Gastrocnemius medialis (tissue), 4 donors: ENCODE measurements at regions of chr14 and their contacts with region 1.

Region 1: DNA sequence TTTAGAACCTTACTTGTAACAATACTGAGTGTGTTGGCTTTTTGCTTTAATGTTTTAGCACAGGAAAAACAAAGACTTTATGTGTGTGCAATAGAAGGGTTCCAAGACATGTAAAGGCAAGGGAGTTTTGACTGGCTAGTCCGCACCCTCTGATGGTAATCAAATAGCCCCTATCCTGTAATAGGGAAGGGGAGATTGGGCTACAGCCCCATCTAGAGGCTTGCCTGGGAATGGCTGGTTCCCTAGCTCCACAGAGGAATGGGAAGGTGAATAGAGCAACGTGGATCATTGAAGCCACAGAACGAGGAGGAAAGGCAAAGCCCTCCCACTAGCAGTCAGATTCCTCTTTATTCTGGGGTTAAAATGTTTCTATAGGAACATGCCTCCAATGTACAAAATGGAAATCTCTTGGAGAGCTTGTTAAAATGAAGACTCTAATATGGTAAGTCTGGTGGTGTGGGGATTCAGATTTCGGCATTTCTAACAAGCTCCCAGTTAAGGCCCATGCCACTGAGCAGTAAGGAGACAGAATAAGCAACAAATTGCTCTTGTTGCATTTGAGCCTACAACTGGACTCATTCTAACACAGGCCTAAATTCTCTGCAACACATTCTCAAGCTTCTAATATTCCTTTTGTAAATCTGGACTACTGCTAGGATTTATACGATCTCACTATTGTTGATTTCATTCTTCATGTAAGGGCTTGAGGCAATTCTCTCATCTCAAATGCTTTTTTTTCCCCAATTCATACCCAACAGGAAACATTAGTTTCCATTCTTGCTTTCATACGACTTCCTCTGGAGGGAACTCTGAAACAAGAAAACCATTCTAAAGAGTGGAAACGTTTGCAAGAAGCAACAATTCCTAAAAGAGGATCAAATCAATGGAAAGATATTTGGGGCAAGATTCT is 57.1 kb downstream of the NIN start:
- DNase-seq: peak in 1 of 2 donors; percentile 53
- ATAC-seq: peak; percentile 48 to 74
- H3K4me3 ChIP-seq: no peak overlapping the region
- H3K27ac ChIP-seq: peak overlapping the region in 3 of 4 donors; percentile 70 to 79 (median 79)
- H3K4me1 ChIP-seq: peaks cover 17 to 37% of the 10 kb centered on the region in 2 donors
- H3K27me3 ChIP-seq: no peaks in the 10 kb centered on the region
- CTCF ChIP-seq: peak; percentile 58 to 87 (median 79)
- POLR2A ChIP-seq: no peak

Region 2: GRCh38 chr14:50321009-50321660 is 452.8 kb before region 1 on chr14:
- in situ Hi-C with region 1: loop called in 2 of 4 experiments (anchors 25 kb)
- intact Hi-C with region 1: loop called (anchors 2 kb)
- DNase-seq: peak; percentile 44 to 51
- ATAC-seq: peak; percentile 96 to 99
- H3K4me3 ChIP-seq: peak overlapping the region; percentile 15 to 40 (median 28)
- H3K27ac ChIP-seq: peak overlapping the region; percentile 52 to 72 (median 63)
- H3K4me1 ChIP-seq: peaks cover 16 to 23% of the 10 kb centered on the region in 2 donors
- H3K27me3 ChIP-seq: no peaks in the 10 kb centered on the region
- CTCF ChIP-seq: peak; percentile 52 to 89 (median 77)
- POLR2A ChIP-seq: no peak

Region 3: DNA sequence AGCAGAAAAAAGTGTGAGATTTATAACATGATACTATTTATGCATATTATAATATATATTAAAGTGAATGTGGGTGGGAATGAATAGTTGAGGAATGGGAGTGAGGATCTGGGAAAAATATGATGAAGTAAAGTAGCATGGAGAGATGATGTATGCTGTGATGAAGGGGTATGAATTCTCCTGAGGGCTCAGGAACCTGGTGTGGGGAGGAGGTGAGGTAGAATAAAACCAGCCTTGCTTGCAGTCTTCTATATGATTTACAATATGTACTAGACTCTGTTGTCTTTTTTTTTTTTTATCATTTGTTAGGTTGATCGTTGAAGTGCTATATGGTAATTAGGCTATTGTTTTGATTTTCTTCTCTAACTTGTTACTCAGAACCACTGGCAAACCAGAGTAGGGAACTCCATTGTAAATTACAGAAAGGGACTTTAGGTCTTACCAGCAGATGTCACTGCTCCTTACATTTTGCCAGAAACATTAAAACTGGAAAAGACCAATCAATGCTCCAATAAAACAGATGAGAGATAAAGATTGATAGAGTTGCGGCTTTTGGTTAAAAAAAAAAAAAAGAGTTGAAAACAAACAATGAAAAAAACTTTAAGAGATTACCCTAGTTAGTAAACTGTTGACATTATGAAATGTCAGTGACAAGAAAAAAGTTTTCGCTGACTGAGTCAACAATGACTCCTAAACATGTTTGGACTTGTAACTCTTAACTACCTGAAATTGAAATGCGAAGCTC is 174.0 kb before region 1 on chr14:
- in situ Hi-C with region 1: loop called in 3 of 4 experiments (anchors 5 to 10 kb)
- intact Hi-C with region 1: loop called (anchors 1 kb)
- DNase-seq: no peak
- ATAC-seq: peak in 1 of 2 donors; percentile 51
- H3K4me3 ChIP-seq: no peak overlapping the region
- H3K27ac ChIP-seq: no peak overlapping the region
- H3K4me1 ChIP-seq: no peaks in the 10 kb centered on the region
- H3K27me3 ChIP-seq: no peaks in the 10 kb centered on the region
- CTCF ChIP-seq: peak; percentile 29 to 61 (median 53)
- POLR2A ChIP-seq: no peak

Region 4: GRCh38 chr14:50667996-50668825 is 105.7 kb before region 1 on chr14 and contains the start of gene SAV1:
- in situ Hi-C with region 1: no loop called
- intact Hi-C with region 1: loop called (anchors 1 kb)
- DNase-seq: peak; percentile 72 to 82
- ATAC-seq: peak; percentile 87 to 90
- H3K4me3 ChIP-seq: peak within 1 kb of the TSS; percentile 65 to 95 (median 80)
- H3K27ac ChIP-seq: peak within 1 kb of the TSS; percentile 89 to 97 (median 96)
- H3K4me1 ChIP-seq: peaks cover 27 to 29% of the 10 kb centered on the region in 2 donors
- H3K27me3 ChIP-seq: no peaks in the 10 kb centered on the region
- CTCF ChIP-seq: peak in 1 of 5 experiments; percentile 7
- POLR2A ChIP-seq: peak; percentile 93 to 94
- total RNA-seq, gene SAV1: 18.3 to 68.7 (median 36.8) TPM

Region 5: GRCh38 chr14:50860478-50861086 is 86.7 kb after region 1 on chr14:
- in situ Hi-C with region 1: no loop called
- intact Hi-C with region 1: loop called (anchors 5 kb)
- DNase-seq: peak; percentile 42 to 57
- ATAC-seq: peak; percentile 76 to 77
- H3K4me3 ChIP-seq: peak overlapping the region; percentile 59 to 61 (median 60)
- H3K27ac ChIP-seq: peak overlapping the region; percentile 36 to 73 (median 66)
- H3K4me1 ChIP-seq: peaks cover 9 to 10% of the 10 kb centered on the region in 2 donors
- H3K27me3 ChIP-seq: no peaks in the 10 kb centered on the region
- CTCF ChIP-seq: peak; percentile 38 to 84 (median 50)
- POLR2A ChIP-seq: no peak